MCF 10A (cell line): ENCODE measurements at regions of chr17 and their contacts with region 1.

Region 1: GRCh38 chr17:55356434-55357328 is 65.0 kb downstream of the MMD start:
- DNase-seq: peak; percentile 81
- H3K4me3 Mint-ChIP-seq: no peak overlapping the region
- H3K27ac Mint-ChIP-seq: no peak overlapping the region
- H3K4me1 Mint-ChIP-seq: no peaks in the 10 kb centered on the region
- H3K27me3 Mint-ChIP-seq: no peaks in the 10 kb centered on the region
- CTCF ChIP-seq: peak; percentile 75

Region 2: DNA sequence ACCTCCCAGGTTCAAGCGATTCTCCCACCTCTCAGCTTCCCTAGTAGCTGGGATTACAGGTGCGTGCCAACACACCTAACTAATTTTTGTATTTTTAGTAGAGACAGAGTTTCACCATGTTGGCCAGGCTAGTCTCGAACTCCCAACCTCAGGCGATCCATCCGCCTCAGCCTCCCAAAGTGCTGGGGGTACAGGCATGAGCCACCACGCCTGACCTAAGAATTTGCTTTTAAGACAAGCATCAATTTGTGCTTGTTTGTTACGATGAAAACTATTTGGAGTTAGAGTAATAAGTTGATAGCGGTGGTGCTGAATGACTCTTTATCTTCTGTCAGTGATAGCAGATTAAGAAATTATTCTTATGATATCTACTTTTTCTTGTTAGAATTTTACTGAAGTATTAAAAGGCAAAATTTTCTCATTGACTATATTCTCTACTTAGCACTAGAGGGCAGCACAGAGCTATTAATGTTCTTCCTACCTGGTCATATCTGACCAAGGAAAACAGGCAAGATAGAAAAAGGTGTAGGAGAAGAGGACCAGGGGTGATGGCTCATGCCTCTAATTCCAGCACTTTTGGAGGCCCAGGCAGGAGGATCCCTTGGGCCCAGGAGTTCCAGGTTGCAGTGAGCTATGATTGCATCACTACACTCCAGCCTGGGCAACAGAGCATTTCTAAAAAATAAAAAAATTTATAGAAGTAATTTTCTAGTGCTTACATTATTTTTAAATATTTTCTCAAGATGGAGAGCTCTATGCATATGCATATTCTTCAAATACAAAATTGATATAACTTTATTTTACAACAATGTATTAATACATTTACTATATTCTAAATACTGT is 363.7 kb before region 1 on chr17:
- CTCF ChIA-PET with region 1: interaction called, 154 read pairs
- POLR2A ChIA-PET with region 1: no interaction called
- intact Hi-C with region 1: no loop called
- DNase-seq: peak; percentile 63
- H3K4me3 Mint-ChIP-seq: no peak overlapping the region
- H3K27ac Mint-ChIP-seq: no peak overlapping the region
- H3K4me1 Mint-ChIP-seq: no peaks in the 10 kb centered on the region
- H3K27me3 Mint-ChIP-seq: no peaks in the 10 kb centered on the region
- CTCF ChIP-seq: peak; percentile 61

Region 3: GRCh38 chr17:55053855-55054254 is 302.8 kb before region 1 on chr17:
- CTCF ChIA-PET with region 1: interaction called, 15 read pairs
- POLR2A ChIA-PET with region 1: no interaction called
- intact Hi-C with region 1: no loop called
- DNase-seq: no peak
- H3K4me3 Mint-ChIP-seq: no peak overlapping the region
- H3K27ac Mint-ChIP-seq: no peak overlapping the region
- H3K4me1 Mint-ChIP-seq: no peaks in the 10 kb centered on the region
- H3K27me3 Mint-ChIP-seq: no peaks in the 10 kb centered on the region
- CTCF ChIP-seq: peak; percentile 43

Region 4: DNA sequence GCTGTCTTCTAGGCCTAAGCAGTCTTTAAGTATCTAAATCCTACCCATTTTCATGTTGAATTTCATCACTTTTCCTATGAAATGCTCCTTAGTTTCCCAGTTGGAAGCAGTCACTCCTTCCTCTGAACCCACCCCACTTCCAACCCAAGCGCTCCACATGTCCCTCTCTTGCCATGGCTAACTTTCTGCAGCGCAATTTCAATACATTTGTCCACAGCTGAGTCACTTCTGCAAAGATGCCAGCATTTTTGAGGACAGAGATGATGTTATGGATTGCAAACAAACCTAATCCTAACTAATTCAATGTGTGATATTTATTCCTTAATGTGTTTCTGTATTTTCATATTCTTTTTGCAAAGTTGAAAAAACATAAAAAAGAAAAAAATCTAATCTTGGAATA is 20.3 kb before region 1 on chr17:
- CTCF ChIA-PET with region 1: interaction called, 11 read pairs
- POLR2A ChIA-PET with region 1: no interaction called
- intact Hi-C with region 1: no loop called
- DNase-seq: no peak
- H3K4me3 Mint-ChIP-seq: no peak overlapping the region
- H3K27ac Mint-ChIP-seq: no peak overlapping the region
- H3K4me1 Mint-ChIP-seq: no peaks in the 10 kb centered on the region
- H3K27me3 Mint-ChIP-seq: peaks cover 15% of the 10 kb centered on the region
- CTCF ChIP-seq: no peak

Region 5: GRCh38 chr17:55496094-55496881 is 139.6 kb after region 1 on chr17:
- CTCF ChIA-PET with region 1: interaction called, 5 read pairs
- POLR2A ChIA-PET with region 1: no interaction called
- intact Hi-C with region 1: loop called (anchors 5 kb)
- DNase-seq: peak; percentile 56
- H3K4me3 Mint-ChIP-seq: no peak overlapping the region
- H3K27ac Mint-ChIP-seq: no peak overlapping the region
- H3K4me1 Mint-ChIP-seq: peaks cover 15% of the 10 kb centered on the region
- H3K27me3 Mint-ChIP-seq: no peaks in the 10 kb centered on the region
- CTCF ChIP-seq: no peak

Region 6: GRCh38 chr17:55549140-55549539 is 192.5 kb after region 1 on chr17:
- CTCF ChIA-PET with region 1: no interaction called
- POLR2A ChIA-PET with region 1: no interaction called
- intact Hi-C with region 1: no loop called
- DNase-seq: peak; percentile 47
- H3K4me3 Mint-ChIP-seq: no peak overlapping the region
- H3K27ac Mint-ChIP-seq: no peak overlapping the region
- H3K4me1 Mint-ChIP-seq: peaks cover 16% of the 10 kb centered on the region
- H3K27me3 Mint-ChIP-seq: no peaks in the 10 kb centered on the region
- CTCF ChIP-seq: no peak

Region 7: GRCh38 chr17:55617441-55617840 is 260.8 kb after region 1 on chr17:
- CTCF ChIA-PET with region 1: no interaction called
- POLR2A ChIA-PET with region 1: no interaction called
- intact Hi-C with region 1: no loop called
- DNase-seq: no peak
- H3K4me3 Mint-ChIP-seq: no peak overlapping the region
- H3K27ac Mint-ChIP-seq: no peak overlapping the region
- H3K4me1 Mint-ChIP-seq: no peaks in the 10 kb centered on the region
- H3K27me3 Mint-ChIP-seq: peaks cover 8% of the 10 kb centered on the region
- CTCF ChIP-seq: no peak